ENCODE measurements at regions of chr15 and their contacts with region 1.

Region 1: DNA sequence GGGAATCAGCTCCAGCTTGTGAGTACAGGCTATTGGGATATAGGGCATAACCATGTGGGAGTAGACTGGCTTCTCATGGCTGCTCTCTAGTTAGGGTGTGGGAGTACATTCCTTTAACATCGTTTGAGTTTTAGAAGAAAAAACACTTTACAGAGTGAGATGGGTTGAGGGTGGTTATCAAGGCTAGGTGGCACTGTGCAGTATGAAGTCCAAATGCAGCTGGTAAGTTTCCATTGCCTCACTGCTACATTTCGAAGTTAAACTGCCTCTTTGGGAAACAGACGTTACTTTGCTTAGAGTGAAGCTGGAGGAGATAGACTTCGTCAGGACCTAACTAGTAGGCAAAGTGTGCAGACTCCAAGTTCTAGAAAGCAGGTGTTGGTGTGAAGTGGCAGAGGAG is 192.4 kb downstream of the SQOR start:
- DNase-seq: peak; percentile 3
- ATAC-seq: 0 out of 3 replicates have a peak, but pooled peaks have one; percentile 31
- H3K4me3 ChIP-seq: no peak overlapping the region
- H3K27ac ChIP-seq: no peak overlapping the region
- H3K4me1 ChIP-seq: no peaks in the 10 kb centered on the region
- H3K27me3 ChIP-seq: no peaks in the 10 kb centered on the region
- CTCF ChIP-seq: 0 out of 2 replicates have a peak, but pooled peaks have one; percentile 15
- EP300 ChIP-seq: no peak
- POLR2A ChIP-seq: no peak
- RAD21 ChIP-seq: no peak

Region 2: GRCh38 chr15:44738340-44738984 is 1088.8 kb before region 1 on chr15:
- CTCF ChIA-PET with region 1: no interaction called
- POLR2A ChIA-PET with region 1: no interaction called
- in situ Hi-C with region 1: no loop called
- intact Hi-C with region 1: no loop called
- DNase-seq: peak; percentile 47
- ATAC-seq: no peak
- H3K4me3 ChIP-seq: no peak overlapping the region
- H3K27ac ChIP-seq: no peak overlapping the region
- H3K4me1 ChIP-seq: no peaks in the 10 kb centered on the region
- H3K27me3 ChIP-seq: no peaks in the 10 kb centered on the region
- CTCF ChIP-seq: peak; percentile 64
- EP300 ChIP-seq: no peak
- POLR2A ChIP-seq: no peak
- RAD21 ChIP-seq: peak; percentile 52; the same call in 1 of the 2 replicates

Region 3: DNA sequence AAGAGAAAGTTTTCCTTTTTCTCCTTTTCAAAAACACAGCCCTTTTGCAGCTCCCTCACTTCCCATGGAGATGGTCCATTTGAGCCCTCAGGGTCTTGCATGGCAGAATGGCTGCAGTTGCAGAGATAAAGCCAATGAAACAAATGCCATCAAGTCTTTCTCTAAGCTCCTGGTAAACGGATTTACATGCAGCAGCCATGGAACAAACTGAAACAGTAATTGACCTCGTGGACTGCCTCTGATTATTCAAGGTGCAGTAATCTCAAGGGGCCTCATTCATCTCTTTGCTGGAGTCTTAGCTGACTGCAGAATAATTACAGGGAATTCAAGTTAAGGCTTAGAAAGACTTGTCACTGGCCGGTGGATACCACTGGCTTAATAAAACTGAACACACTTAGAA is 67.3 kb before region 1 on chr15:
- CTCF ChIA-PET with region 1: no interaction called
- POLR2A ChIA-PET with region 1: no interaction called
- in situ Hi-C with region 1: no loop called
- intact Hi-C with region 1: loop called (anchors 2 kb)
- DNase-seq: no peak
- ATAC-seq: no peak
- H3K4me3 ChIP-seq: no peak overlapping the region
- H3K27ac ChIP-seq: no peak overlapping the region
- H3K4me1 ChIP-seq: no peaks in the 10 kb centered on the region
- H3K27me3 ChIP-seq: peaks cover 0 to 1% of the 10 kb centered on the region in 2 experiments; a peak in 1 of 5 replicates
- CTCF ChIP-seq: no peak
- EP300 ChIP-seq: no peak
- POLR2A ChIP-seq: no peak
- RAD21 ChIP-seq: no peak

Region 4: DNA sequence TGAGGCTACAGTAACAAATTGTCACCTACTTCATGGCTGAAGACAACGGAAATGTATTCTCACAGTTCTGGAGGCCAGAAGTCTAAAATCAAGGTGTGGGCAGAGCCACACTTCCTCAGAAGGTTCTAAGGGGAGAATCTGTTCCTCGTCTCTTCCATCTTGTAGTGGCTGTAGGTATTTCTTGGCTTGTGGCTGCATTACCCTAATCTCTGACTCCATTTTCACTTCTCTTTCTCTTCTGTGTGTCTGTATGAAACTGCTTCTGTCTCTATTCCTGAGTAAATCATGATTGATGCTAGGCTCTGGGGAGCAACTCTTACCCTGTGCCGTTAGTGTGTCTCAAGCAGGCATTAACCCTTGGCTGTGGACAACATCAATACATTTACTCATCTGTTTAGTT is 27.8 kb before region 1 on chr15:
- CTCF ChIA-PET with region 1: no interaction called
- POLR2A ChIA-PET with region 1: no interaction called
- in situ Hi-C with region 1: no loop called
- intact Hi-C with region 1: no loop called
- DNase-seq: no peak
- ATAC-seq: no peak
- H3K4me3 ChIP-seq: no peak overlapping the region
- H3K27ac ChIP-seq: no peak overlapping the region
- H3K4me1 ChIP-seq: peaks cover 44% of the 10 kb centered on the region
- H3K27me3 ChIP-seq: no peaks in the 10 kb centered on the region
- CTCF ChIP-seq: no peak
- EP300 ChIP-seq: no peak
- POLR2A ChIP-seq: no peak
- RAD21 ChIP-seq: no peak

Region 5: GRCh38 chr15:45847645-45848044 is 20.4 kb after region 1 on chr15:
- CTCF ChIA-PET with region 1: no interaction called
- POLR2A ChIA-PET with region 1: no interaction called
- in situ Hi-C with region 1: no loop called
- intact Hi-C with region 1: loop called (anchors 1 kb)
- DNase-seq: no peak
- ATAC-seq: no peak
- H3K4me3 ChIP-seq: no peak overlapping the region
- H3K27ac ChIP-seq: no peak overlapping the region
- H3K4me1 ChIP-seq: no peaks in the 10 kb centered on the region
- H3K27me3 ChIP-seq: no peaks in the 10 kb centered on the region
- CTCF ChIP-seq: no peak
- EP300 ChIP-seq: no peak
- POLR2A ChIP-seq: no peak
- RAD21 ChIP-seq: no peak

Region 6: GRCh38 chr15:46644501-46645481 is 817.5 kb after region 1 on chr15:
- CTCF ChIA-PET with region 1: no interaction called
- POLR2A ChIA-PET with region 1: no interaction called
- in situ Hi-C with region 1: no loop called
- intact Hi-C with region 1: no loop called
- DNase-seq: no peak
- ATAC-seq: no peak
- H3K4me3 ChIP-seq: no peak overlapping the region
- H3K27ac ChIP-seq: no peak overlapping the region
- H3K4me1 ChIP-seq: no peaks in the 10 kb centered on the region
- H3K27me3 ChIP-seq: no peaks in the 10 kb centered on the region
- CTCF ChIP-seq: no peak
- EP300 ChIP-seq: no peak
- POLR2A ChIP-seq: no peak
- RAD21 ChIP-seq: no peak

Measured in HepG2 (cell line).